ENCODE measurements at regions of chr4 and their contacts with region 1.

Region 1: GRCh38 chr4:34771632-34772031 is 1472.7 kb downstream of the ARAP2 start:
- DNase-seq: no peak
- H3K4me3 ChIP-seq: no peak overlapping the region
- H3K27ac ChIP-seq: no peak overlapping the region
- H3K4me1 ChIP-seq: no peaks in the 10 kb centered on the region
- H3K27me3 ChIP-seq: no peaks in the 10 kb centered on the region
- CTCF ChIP-seq: no peak

Region 2: GRCh38 chr4:34733185-34733941 is 38.3 kb before region 1 on chr4:
- intact Hi-C with region 1: no loop called
- DNase-seq: no peak
- H3K4me3 ChIP-seq: no peak overlapping the region
- H3K27ac ChIP-seq: no peak overlapping the region
- H3K4me1 ChIP-seq: no peaks in the 10 kb centered on the region
- H3K27me3 ChIP-seq: no peaks in the 10 kb centered on the region
- CTCF ChIP-seq: no peak

Region 3: DNA sequence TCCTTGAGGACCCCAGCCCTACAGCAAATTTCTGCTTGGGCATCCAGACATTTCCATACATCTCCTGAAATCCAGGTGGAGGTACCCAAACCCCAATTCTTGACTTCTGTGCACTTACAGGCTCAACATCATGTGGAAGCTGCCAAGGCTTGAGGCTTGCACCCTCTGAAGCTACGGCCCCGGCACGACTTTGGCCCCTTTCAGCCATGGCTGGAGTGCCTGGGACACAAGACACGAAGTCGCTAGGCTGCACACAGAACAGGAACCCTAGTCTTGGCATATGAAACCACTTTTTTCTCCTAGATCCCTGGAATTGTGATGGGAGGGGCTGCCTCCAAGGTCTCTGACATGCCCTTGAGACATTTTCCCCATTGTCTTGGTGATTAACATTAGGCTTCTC is 55.0 kb after region 1 on chr4:
- intact Hi-C with region 1: loop called (anchors 5 kb)
- DNase-seq: no peak
- H3K4me3 ChIP-seq: no peak overlapping the region
- H3K27ac ChIP-seq: no peak overlapping the region
- H3K4me1 ChIP-seq: no peaks in the 10 kb centered on the region
- H3K27me3 ChIP-seq: no peaks in the 10 kb centered on the region
- CTCF ChIP-seq: no peak

Region 4: DNA sequence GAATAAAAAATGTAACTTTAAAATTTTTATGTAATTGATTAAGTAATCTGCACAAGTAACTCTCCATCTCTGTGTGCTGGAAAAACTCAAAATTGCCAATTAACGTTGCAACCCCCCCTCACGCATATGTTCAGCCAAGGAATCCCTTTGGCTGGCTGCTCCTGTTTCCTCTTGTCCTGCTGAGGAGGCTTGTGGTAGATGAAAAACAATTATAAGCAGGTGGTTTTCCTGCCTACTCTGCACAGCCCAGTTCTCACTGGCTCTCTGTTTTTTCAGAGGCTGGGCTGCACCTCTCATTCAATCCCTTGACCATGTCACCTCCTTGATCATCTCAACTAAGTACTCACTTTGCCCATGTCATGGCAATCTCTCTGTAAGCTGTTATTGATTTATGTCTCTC is 404.3 kb after region 1 on chr4:
- intact Hi-C with region 1: no loop called
- DNase-seq: no peak
- H3K4me3 ChIP-seq: no peak overlapping the region
- H3K27ac ChIP-seq: no peak overlapping the region
- H3K4me1 ChIP-seq: no peaks in the 10 kb centered on the region
- H3K27me3 ChIP-seq: no peaks in the 10 kb centered on the region
- CTCF ChIP-seq: no peak

Region 5: DNA sequence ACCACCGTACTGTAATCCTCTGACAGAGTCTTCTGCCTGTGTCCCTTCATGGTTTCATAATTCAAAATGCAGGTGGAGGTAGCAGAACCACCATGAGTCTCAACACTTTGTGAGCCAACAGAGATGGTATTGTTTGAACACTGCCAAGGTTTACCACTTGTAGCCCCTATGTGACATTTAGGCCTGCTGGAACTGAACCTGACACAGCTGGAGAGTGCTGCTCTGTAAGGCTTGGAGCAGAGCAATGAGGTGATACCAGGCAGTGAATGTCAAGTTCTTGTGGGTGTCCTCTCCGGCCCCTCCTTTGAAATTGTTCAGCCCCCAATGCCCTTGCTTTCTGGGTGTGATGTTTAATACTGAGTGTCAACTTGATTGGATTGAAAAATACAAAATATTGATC is 429.8 kb after region 1 on chr4:
- intact Hi-C with region 1: no loop called
- DNase-seq: no peak
- H3K4me3 ChIP-seq: no peak overlapping the region
- H3K27ac ChIP-seq: no peak overlapping the region
- H3K4me1 ChIP-seq: no peaks in the 10 kb centered on the region
- H3K27me3 ChIP-seq: no peaks in the 10 kb centered on the region
- CTCF ChIP-seq: no peak